Lower leg skin (tissue), 4 donors: ENCODE measurements at regions of chr12 and their contacts with region 1.

Region 1: GRCh38 chr12:105399428-105400081 is 69.1 kb downstream of the C12orf75 start:
- DNase-seq: no peak
- H3K4me3 ChIP-seq: no peak overlapping the region
- CTCF ChIP-seq: no peak
- POLR2A ChIP-seq: no peak

Region 2: DNA sequence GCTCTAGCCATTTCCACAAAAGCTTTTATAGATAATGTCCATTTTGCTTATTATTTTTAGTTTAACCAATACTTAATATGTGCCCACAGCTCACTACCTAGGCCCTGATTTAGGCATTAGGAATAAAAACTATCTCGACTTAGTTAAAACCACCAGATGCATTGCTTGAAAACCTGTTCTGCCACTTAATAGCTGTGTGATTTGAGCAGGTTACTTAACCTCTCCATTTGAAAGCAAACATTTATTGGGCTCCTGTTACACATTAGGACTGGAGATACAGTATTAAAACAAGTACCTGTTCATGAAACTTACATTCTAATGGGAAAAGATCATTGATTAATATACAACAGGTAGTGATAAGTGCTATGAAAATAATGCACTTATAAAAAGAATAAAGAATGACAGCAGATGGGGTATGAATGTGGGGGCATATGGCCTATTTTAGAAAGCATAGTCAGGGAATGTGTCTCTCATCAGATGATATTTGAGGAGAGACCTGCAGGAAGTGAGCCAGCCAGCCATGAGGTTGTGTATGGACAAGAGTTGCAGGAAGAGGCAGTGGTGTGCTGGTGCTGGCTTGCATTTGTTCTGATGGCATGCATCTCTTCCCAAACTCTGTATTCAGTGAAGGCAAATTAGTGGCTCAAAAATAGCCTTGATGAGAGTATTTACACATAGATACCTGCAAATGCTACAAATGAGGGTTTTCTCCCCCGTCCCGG is 379.2 kb before region 1 on chr12:
- intact Hi-C with region 1: no loop called
- DNase-seq: no peak
- H3K4me3 ChIP-seq: no peak overlapping the region
- CTCF ChIP-seq: no peak
- POLR2A ChIP-seq: no peak

Region 3: DNA sequence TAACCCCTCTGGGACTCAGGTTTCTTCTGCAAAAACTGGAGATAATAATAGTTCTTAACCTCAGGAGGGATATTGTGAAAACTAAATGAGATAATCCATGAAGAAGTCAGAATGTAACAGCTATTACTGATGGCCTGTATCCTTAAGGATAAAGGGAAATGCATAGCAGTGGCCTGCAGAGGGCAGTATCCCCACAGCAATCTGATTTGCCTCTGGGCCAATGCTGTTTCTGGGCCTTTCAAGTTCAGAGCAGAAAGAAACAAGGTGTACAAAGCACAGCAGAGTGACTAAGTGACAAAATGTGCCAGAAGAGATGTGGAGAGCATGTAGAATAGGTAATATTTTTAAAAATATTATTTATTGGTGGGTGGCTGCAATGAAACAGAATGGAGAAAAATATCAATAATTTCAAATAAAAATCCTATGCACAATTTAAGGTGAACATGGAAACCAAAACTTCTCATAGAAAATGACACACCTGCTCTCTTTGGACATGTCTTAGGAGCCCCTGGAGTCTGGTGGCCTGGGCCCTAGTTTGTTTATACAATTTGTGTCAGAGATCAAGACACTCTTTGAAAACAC is 21.2 kb after region 1 on chr12:
- intact Hi-C with region 1: no loop called
- DNase-seq: peak; percentile 76 to 93
- H3K4me3 ChIP-seq: no peak overlapping the region
- CTCF ChIP-seq: peak in 2 of 3 donors; percentile 25 to 33
- POLR2A ChIP-seq: no peak

Region 4: GRCh38 chr12:105476616-105477015 is 77.1 kb after region 1 on chr12:
- intact Hi-C with region 1: loop called (anchors 2 kb)
- DNase-seq: no peak
- H3K4me3 ChIP-seq: no peak overlapping the region
- CTCF ChIP-seq: no peak
- POLR2A ChIP-seq: no peak

Region 5: GRCh38 chr12:105538880-105539279 is 139.3 kb after region 1 on chr12:
- intact Hi-C with region 1: no loop called
- DNase-seq: no peak
- H3K4me3 ChIP-seq: no peak overlapping the region
- CTCF ChIP-seq: no peak
- POLR2A ChIP-seq: no peak

Region 6: DNA sequence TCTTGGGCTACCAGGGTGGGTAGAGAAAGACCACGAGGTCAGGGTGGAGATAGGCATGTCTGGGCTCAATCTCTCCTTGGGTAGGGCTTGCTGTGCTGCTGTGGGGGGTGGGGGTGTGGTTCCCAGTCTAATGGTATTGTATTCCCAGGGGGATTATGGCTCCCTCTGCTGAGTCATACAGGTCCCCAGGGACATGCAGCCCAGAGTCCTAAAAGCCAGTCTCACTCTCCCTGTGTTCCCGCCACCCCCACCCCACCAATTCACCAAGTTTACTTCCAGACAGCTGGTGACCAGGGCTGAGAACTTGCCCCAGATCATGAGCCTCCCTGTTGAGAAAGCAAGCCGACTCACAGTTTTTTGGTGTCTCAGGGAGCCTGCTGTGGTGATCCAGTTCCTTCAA is 298.5 kb after region 1 on chr12:
- intact Hi-C with region 1: no loop called
- DNase-seq: no peak
- H3K4me3 ChIP-seq: no peak overlapping the region
- CTCF ChIP-seq: no peak
- POLR2A ChIP-seq: no peak